ENCODE measurements at regions of chr14 and their contacts with region 1.

Region 1: DNA sequence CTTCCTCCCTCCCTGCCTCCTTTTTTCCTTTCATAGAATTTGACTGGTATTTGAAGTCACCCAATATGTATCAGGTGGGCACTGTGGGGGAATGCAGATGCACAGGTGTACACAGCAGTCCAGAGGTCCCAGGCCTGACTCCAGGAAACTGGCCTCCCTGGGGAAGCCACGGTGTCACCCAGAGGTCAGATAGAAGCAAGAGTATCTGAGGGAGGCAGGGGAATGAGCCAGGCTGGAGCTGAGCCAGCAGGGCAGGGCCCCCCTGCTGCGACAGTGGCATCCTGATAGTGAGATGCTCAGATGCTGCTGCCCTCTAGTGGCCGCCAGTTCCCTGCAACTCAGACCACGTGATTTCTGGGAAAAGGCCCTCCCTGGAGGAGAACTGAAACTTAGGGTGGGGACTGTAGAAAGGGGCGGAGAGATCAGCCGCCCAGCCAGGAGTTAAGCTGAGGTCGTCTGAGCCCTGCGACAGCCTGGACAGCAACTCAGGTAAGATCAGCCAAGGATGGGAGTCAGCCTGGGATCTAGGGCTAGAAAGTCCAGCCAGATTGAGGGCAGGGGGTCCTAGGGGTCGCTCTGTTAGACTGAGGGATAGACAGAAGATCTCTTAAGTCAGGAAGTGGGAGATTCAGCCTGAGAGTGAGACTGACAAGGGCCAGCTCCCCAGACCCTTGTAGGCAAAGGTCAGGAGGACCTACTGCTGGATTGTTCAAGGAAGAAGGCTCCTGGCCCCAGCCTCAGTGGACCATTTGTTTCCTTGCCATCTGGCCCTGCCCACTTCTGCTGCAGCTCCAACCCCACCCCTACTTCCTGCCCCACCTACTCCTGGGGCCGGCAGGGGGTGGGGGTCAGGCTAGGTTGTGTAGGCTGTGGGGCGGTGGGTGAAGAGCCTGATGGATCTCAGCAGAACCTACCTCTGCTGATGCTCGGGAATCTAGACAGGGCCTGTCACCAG is at the start of gene IRF9:
- DNase-seq: peak; percentile 94 to 100 (median 98)
- ATAC-seq: peak; percentile 84
- H3K4me3 ChIP-seq: peak within 1 kb of the TSS; percentile 95
- H3K4me3 Mint-ChIP-seq: peak within 1 kb of the TSS; percentile 95
- H3K27ac ChIP-seq: peak within 1 kb of the TSS; percentile 97 to 98
- H3K27ac Mint-ChIP-seq: peak within 1 kb of the TSS; percentile 98
- H3K4me1 ChIP-seq: peaks cover 52% of the 10 kb centered on the region
- H3K4me1 Mint-ChIP-seq: peaks cover 57% of the 10 kb centered on the region
- H3K27me3 ChIP-seq: no peaks in the 10 kb centered on the region
- H3K27me3 Mint-ChIP-seq: no peaks in the 10 kb centered on the region
- CTCF ChIP-seq: peak; percentile 84
- total RNA-seq, gene IRF9: 248 to 262 TPM

Region 2: DNA sequence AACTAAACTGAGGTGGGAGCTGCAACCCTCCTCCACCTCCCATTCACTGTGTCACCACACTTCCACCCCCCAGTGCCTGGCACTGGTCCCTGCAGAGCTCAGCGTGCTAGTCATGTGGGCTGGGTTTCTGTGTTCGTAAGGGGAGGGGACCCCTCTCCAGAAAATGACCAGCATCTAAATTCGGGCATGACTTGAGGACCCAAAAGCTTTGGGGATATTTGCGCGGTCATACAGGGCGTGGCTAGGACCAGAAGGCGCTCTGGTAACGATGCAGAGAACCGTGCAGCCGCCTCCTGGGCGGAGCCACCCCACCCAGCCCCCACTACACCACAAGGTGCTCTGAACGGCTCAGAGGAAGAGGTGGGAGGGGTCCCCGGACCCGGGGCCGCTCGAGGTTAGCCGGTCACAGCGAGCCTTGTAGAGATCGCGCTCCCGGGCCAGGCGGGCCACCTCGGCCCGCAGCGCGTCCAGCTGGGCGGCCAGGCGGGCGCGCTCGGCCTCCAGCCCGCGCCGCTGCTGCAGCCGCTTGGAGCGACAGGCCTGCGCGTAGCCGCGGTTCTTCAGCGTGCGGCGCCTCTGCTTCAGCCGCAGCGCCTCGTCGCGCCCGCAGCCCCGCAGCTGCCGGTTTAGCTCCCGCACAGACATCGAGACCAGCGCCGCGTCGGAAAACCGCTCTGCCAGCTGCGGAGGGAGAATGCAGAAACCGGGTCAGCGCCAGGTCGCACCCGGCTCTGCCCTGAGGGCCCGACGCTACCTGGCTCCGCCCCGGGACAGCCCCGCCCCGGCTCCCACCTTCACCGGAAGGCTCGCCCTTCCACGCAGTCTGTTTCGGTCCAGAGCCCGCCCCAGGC is 80.0 kb before region 1 on chr14:
- CTCF ChIA-PET with region 1: interaction called, 3 read pairs
- POLR2A ChIA-PET with region 1: interaction called, 14 read pairs
- intact Hi-C with region 1: no loop called
- DNase-seq: peak; percentile 47 to 82 (median 68)
- ATAC-seq: peak; percentile 90
- H3K4me3 ChIP-seq: peak overlapping the region; percentile 56
- H3K4me3 Mint-ChIP-seq: peak overlapping the region; percentile 93
- H3K27ac ChIP-seq: peak overlapping the region; percentile 2 to 52
- H3K27ac Mint-ChIP-seq: peak overlapping the region; percentile 90
- H3K4me1 ChIP-seq: peaks cover 21% of the 10 kb centered on the region
- H3K4me1 Mint-ChIP-seq: peaks cover 24% of the 10 kb centered on the region
- H3K27me3 ChIP-seq: no peaks in the 10 kb centered on the region
- H3K27me3 Mint-ChIP-seq: no peaks in the 10 kb centered on the region
- CTCF ChIP-seq: no peak

Region 3: GRCh38 chr14:24135834-24136542 is 25.1 kb before region 1 on chr14 and contains the start of gene PSME1:
- CTCF ChIA-PET with region 1: interaction called, 33 read pairs
- POLR2A ChIA-PET with region 1: interaction called, 61 read pairs
- intact Hi-C with region 1: loop called (anchors 1 to 2 kb)
- DNase-seq: peak; percentile 89 to 97 (median 95)
- ATAC-seq: peak; percentile 97
- H3K4me3 ChIP-seq: peak within 1 kb of the TSS; percentile 74
- H3K4me3 Mint-ChIP-seq: peak within 1 kb of the TSS; percentile 94
- H3K27ac ChIP-seq: peak within 1 kb of the TSS; percentile 72 to 88
- H3K27ac Mint-ChIP-seq: peak within 1 kb of the TSS; percentile 85
- H3K4me1 ChIP-seq: peaks cover 68% of the 10 kb centered on the region
- H3K4me1 Mint-ChIP-seq: peaks cover 70% of the 10 kb centered on the region
- H3K27me3 ChIP-seq: no peaks in the 10 kb centered on the region
- H3K27me3 Mint-ChIP-seq: no peaks in the 10 kb centered on the region
- CTCF ChIP-seq: no peak
- total RNA-seq, gene PSME1: 166 to 171 TPM

Region 4: DNA sequence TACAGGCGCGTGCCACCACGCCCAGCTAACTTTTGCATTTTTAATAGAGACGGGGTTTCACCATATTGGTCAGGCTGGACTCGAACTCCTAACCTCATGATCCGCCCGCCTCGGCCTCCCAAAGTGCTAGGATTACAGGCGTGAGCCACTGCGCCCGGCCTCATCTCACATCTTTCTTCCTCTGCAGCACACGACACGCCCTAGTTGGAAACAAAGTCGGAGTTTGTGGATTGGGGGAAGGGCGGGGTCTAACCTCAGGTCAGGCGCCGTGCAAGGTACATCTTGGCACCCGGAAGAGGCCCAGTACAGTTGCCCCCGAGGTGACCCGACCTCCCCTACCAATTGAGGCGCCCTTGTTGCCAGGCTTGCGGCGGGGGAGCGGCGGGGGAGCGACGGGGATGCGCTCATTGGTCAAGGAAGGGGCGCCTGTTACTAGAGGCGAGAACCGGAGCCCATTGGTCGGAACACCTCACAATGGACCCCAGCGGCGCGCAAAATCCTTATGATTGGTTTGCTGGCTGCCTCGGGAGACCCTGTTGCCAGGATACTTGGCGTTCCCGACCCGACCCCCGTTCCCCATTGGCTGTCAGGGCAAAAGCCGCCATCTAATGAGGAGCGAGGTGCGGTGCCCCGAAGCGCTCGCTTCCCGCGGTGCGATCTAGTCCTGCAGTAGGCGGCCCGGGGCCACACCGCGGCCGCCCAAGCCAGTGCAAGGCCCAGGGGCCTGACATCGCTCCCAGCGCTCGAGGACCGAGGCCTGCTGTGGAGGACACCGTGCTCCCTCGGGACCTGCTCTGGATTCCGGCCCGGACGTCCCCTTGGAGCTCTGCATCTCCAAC is 10.5 kb after region 1 on chr14 and contains the start of gene REC8:
- CTCF ChIA-PET with region 1: interaction called, 9 read pairs
- POLR2A ChIA-PET with region 1: interaction called, 53 read pairs
- intact Hi-C with region 1: no loop called
- DNase-seq: peak; percentile 54 to 85 (median 70)
- ATAC-seq: peak; percentile 83
- H3K4me3 ChIP-seq: peak within 1 kb of the TSS; percentile 56
- H3K4me3 Mint-ChIP-seq: peak within 1 kb of the TSS; percentile 89
- H3K27ac ChIP-seq: peak within 1 kb of the TSS; percentile 29 to 44
- H3K27ac Mint-ChIP-seq: peak within 1 kb of the TSS; percentile 79
- H3K4me1 ChIP-seq: peaks cover 21% of the 10 kb centered on the region
- H3K4me1 Mint-ChIP-seq: peaks cover 42% of the 10 kb centered on the region
- H3K27me3 ChIP-seq: no peaks in the 10 kb centered on the region
- H3K27me3 Mint-ChIP-seq: no peaks in the 10 kb centered on the region
- CTCF ChIP-seq: no peak
- total RNA-seq, gene REC8: 105 to 107 TPM

Region 5: DNA sequence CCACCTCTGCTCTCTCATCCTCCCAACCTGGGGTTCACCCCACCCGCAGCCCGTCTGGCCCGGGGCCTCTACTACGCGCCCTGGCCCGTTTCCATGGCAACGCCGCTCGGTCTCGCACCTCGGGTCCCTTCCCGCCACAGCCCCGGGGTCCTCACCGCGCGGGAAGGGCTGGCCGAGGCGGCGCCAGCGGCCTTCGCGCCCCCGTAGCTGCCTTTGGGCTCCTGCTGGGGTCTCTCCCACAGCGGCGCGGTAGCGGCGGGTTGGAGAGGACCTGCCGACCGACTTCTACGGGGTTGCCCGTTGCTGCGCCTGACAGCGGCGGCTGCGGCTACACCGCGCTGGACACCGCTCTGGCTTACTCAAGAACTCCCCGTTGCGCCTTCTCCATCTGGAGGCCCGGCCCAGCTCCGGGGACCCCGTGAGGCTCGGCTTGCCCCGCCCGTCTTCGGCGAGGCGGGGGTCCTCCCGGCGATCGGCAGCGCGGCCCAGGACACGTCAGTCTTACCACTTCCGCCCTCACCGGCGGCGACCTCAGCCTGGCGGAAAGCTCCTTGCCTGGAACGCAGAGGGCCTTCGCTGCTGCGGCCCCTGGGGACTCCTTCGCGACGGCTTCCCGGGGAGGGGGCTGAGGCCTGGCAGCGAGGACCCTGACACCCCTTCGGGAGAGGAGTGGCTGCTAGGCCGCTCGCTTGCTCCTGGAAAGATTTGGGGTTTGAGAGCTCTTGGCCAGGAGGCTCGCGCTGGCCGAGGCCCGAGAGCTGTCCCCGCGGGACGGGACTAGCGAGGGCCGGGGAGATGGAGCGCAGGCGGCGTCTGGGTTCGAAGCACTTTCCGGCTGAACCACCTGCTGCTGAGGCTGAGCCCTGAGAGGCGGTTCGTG is 34.3 kb after region 1 on chr14 and contains the start of gene TM9SF1:
- CTCF ChIA-PET with region 1: interaction called, 4 read pairs
- POLR2A ChIA-PET with region 1: interaction called, 85 read pairs
- intact Hi-C with region 1: loop called in 1 of 2 experiments (anchors 1 kb)
- DNase-seq: peak; percentile 78 to 95 (median 86)
- ATAC-seq: peak; percentile 88
- H3K4me3 ChIP-seq: peak within 1 kb of the TSS; percentile 93
- H3K4me3 Mint-ChIP-seq: peak within 1 kb of the TSS; percentile 87
- H3K27ac ChIP-seq: peak within 1 kb of the TSS; percentile 97 to 99
- H3K27ac Mint-ChIP-seq: peak within 1 kb of the TSS; percentile 92
- H3K4me1 ChIP-seq: peaks cover 37% of the 10 kb centered on the region
- H3K4me1 Mint-ChIP-seq: peaks cover 51% of the 10 kb centered on the region
- H3K27me3 ChIP-seq: no peaks in the 10 kb centered on the region
- H3K27me3 Mint-ChIP-seq: no peaks in the 10 kb centered on the region
- CTCF ChIP-seq: no peak
- total RNA-seq, gene TM9SF1: 12.9 to 13.0 TPM

Region 6: GRCh38 chr14:25750436-25750835 is 1589.3 kb after region 1 on chr14:
- CTCF ChIA-PET with region 1: no interaction called
- POLR2A ChIA-PET with region 1: no interaction called
- intact Hi-C with region 1: no loop called
- DNase-seq: no peak
- ATAC-seq: no peak
- H3K4me3 ChIP-seq: no peak overlapping the region
- H3K4me3 Mint-ChIP-seq: no peak overlapping the region
- H3K27ac ChIP-seq: no peak overlapping the region
- H3K27ac Mint-ChIP-seq: no peak overlapping the region
- H3K4me1 ChIP-seq: no peaks in the 10 kb centered on the region
- H3K4me1 Mint-ChIP-seq: no peaks in the 10 kb centered on the region
- H3K27me3 ChIP-seq: no peaks in the 10 kb centered on the region
- H3K27me3 Mint-ChIP-seq: no peaks in the 10 kb centered on the region
- CTCF ChIP-seq: no peak